ENCODE measurements at regions of chr1 and their contacts with region 1.

Region 1: GRCh38 chr1:78004719-78005447 is at the start of gene DNAJB4:
- DNase-seq: peak; percentile 82
- ATAC-seq: peak; percentile 98
- H3K4me3 Mint-ChIP-seq: peak within 1 kb of the TSS; percentile 85
- H3K27ac Mint-ChIP-seq: peak within 1 kb of the TSS; percentile 99
- H3K4me1 Mint-ChIP-seq: peaks cover 41% of the 10 kb centered on the region
- H3K27me3 Mint-ChIP-seq: peaks cover 2% of the 10 kb centered on the region
- CTCF ChIP-seq: no peak
- total RNA-seq, gene DNAJB4: 9.7 to 12.0 TPM

Region 2: GRCh38 chr1:77940921-77941570 is 63.8 kb before region 1 on chr1:
- CTCF ChIA-PET with region 1: no interaction called
- POLR2A ChIA-PET with region 1: no interaction called
- intact Hi-C with region 1: no loop called
- DNase-seq: no peak
- ATAC-seq: no peak
- H3K4me3 Mint-ChIP-seq: no peak overlapping the region
- H3K27ac Mint-ChIP-seq: peak overlapping the region; percentile 5
- H3K4me1 Mint-ChIP-seq: peaks cover 26% of the 10 kb centered on the region
- H3K27me3 Mint-ChIP-seq: no peaks in the 10 kb centered on the region
- CTCF ChIP-seq: no peak

Region 3: DNA sequence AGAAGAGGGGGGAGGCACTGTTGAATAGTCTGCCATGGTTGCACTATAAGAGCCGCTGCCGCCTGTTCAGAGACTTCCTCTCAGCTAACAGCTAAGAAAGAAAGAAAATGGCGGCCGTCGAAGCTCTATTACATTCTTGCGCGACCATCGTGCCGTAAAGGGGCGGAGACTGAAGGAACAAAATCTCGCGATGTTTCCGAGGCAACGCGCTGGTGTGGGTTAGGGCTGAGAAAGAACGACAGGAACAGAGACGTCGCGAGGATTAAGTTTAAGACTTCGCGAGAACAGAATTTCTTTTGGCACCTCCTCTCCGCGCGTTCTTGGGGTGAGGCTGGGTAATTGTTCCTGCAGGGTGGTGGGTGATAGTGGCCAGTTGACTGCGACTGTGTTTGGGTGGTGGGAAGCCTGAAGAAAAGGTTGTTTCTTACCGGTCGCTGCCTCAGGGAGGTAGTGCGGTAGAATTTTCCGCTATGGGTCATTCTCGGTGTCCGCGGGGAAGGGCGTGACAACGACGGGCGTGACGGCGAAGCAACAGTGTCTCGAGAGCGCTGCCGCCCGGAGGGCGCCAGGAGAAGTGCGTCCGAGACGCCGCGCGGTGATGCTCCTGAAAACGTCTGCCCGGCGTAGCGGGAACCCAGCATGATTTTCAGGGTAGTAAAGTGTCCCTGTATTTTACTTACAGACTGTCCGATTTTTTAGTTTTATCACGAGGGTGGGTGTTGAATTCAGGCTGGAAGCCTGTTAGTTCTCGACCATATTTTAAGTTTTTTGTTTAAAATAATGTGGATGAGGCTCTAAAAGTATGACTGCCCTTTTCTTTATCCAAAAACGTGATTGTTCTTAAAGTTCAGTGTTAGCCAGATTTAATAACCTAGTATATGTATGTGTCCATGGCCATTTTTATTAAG is 25.7 kb before region 1 on chr1 and contains the start of gene FUBP1:
- CTCF ChIA-PET with region 1: interaction called, 17 read pairs
- POLR2A ChIA-PET with region 1: interaction called, 203 read pairs
- intact Hi-C with region 1: loop called (anchors 1 kb)
- DNase-seq: peak; percentile 97
- ATAC-seq: peak; percentile 76
- H3K4me3 Mint-ChIP-seq: no peak within 1 kb of the TSS
- H3K27ac Mint-ChIP-seq: no peak within 1 kb of the TSS
- H3K4me1 Mint-ChIP-seq: peaks cover 38% of the 10 kb centered on the region
- H3K27me3 Mint-ChIP-seq: no peaks in the 10 kb centered on the region
- CTCF ChIP-seq: peak; percentile 74
- total RNA-seq, gene FUBP1: 256 to 257 TPM

Region 4: GRCh38 chr1:77994117-77994705 is 10.7 kb before region 1 on chr1:
- CTCF ChIA-PET with region 1: interaction called, 6 read pairs
- POLR2A ChIA-PET with region 1: interaction called, 26 read pairs
- intact Hi-C with region 1: no loop called
- DNase-seq: no peak
- ATAC-seq: no peak
- H3K4me3 Mint-ChIP-seq: no peak overlapping the region
- H3K27ac Mint-ChIP-seq: no peak overlapping the region
- H3K4me1 Mint-ChIP-seq: peaks cover 14% of the 10 kb centered on the region
- H3K27me3 Mint-ChIP-seq: no peaks in the 10 kb centered on the region
- CTCF ChIP-seq: no peak

Region 5: DNA sequence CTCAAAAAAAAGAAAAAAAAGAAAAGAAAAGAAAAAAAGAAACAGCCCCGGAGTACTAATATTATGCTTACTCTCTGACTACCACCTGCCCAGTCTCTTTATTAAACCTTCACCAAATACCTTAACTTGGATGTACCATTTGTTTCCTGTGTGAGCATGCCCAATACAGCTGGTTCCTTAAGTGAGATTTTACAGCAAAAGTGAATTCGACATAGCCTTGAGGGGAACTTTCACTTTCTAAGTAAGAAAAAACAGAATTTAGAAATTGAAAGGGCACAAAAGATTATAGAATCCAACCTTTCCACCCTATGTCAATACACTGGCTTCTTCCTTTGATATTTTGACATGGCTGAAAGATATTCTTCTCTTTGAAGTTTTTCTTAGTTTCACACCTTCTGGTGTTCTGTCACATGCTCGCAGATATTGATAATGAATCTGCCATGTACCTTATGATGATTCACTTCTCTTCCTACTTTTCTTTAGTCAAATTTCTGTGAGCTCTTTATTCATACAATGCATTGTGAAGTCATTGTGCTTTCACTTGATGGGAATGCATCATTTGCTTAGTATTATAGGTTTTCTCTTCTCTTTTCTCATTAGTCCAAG is 35.7 kb after region 1 on chr1:
- CTCF ChIA-PET with region 1: interaction called, 3 read pairs
- POLR2A ChIA-PET with region 1: interaction called, 34 read pairs
- intact Hi-C with region 1: loop called (anchors 2 kb)
- DNase-seq: no peak
- ATAC-seq: peak; percentile 86
- H3K4me3 Mint-ChIP-seq: peak overlapping the region; percentile 26
- H3K27ac Mint-ChIP-seq: peak overlapping the region; percentile 67
- H3K4me1 Mint-ChIP-seq: peaks cover 21% of the 10 kb centered on the region
- H3K27me3 Mint-ChIP-seq: peaks cover 17% of the 10 kb centered on the region
- CTCF ChIP-seq: no peak

Region 6: DNA sequence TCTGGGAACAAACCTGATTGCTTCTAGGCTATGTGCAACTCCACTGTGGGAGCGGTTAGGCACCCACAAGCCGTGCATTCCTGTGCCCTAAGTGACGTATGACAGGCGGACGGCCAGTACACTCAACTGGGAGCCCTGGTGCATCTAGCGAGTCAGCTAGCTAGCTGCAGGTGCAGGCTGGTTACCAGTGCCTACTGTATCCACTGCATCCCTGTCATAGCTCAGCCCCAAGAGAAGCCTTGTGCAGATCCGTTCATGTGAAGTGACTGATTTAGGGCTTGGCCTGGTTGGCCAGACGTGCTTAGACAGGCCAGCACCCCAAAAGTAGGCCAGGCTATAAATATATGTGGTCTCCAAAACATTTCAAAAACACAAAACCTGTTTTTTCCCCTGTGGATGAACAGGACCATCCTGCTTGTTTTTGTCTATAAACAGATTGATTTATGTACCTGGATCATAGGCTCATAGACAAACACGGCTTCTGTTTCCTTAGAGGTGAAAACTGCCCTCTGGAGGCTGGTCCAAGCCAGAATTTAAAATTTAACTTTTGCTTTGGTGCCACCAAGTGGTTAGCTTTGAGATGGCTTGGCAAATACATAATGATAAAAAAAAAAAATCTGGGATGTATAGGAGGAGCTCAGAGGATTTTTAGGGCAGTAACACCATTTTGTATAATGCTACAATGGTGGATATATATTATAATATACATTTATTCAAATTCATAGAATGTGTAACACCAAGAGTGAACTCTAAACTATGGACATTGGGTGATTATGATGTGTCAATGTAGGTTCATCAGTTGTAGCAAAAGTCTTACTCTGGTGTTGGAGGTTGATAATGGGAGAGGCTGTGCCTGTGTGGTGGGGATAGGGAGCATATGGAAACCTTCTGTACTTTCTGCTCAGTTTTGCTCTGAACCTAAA is 109.4 kb after region 1 on chr1:
- CTCF ChIA-PET with region 1: interaction called, 34 read pairs
- POLR2A ChIA-PET with region 1: interaction called, 9 read pairs
- intact Hi-C with region 1: loop called (anchors 2 kb)
- DNase-seq: peak; percentile 72
- ATAC-seq: peak; percentile 90
- H3K4me3 Mint-ChIP-seq: no peak overlapping the region
- H3K27ac Mint-ChIP-seq: no peak overlapping the region
- H3K4me1 Mint-ChIP-seq: peaks cover 18% of the 10 kb centered on the region
- H3K27me3 Mint-ChIP-seq: no peaks in the 10 kb centered on the region
- CTCF ChIP-seq: peak; percentile 89

Measured in activated CD8-positive, alpha-beta T cell treated with anti-CD3 and anti-CD28 coated beads for 36 hours (primary cell).